ENCODE measurements at regions of chr10 and their contacts with region 1.

Region 1: DNA sequence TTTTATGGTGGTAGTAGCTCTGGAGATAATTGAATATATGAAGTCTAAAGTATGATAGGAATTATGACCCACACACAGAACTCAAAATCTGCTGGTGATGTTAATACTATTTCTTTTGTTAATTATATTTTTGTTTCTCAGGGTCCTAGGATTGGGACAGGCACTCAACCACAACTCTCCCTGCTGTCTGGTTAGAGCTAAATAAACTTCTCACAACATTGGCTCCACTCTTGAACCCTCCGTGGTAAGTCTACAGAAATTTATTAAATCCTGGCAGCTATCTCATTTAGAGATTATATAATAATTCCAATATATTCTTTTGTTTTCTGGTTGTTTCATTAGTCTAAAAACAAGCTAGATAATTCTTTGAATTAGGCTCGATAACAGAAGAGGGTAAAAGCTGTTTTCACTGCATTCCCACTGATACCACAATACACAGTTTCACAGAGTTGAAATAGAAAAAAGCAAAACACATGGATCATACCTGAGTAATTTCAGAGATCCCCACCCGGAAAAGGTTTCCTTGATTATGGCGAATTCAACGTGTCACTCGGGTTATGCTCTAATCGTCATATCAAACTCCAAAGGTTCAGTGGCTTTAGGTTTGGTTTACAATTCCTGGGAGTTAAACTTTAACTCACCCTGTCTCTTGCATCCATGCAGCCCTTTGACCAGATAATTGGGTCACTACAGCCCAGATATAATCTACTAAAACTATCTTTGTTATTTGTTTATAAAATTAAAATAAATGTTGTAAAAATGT is at the start of gene A1CF:
- DNase-seq: peak; percentile 53 to 67
- H3K4me3 ChIP-seq: peak within 1 kb of the TSS; percentile 55
- H3K4me3 Mint-ChIP-seq: peak within 1 kb of the TSS; percentile 85
- H3K27ac Mint-ChIP-seq: peak within 1 kb of the TSS; percentile 86
- H3K4me1 ChIP-seq: peaks cover 33% of the 10 kb centered on the region
- H3K4me1 Mint-ChIP-seq: peaks cover 15% of the 10 kb centered on the region
- H3K27me3 ChIP-seq: no peaks in the 10 kb centered on the region
- H3K27me3 Mint-ChIP-seq: no peaks in the 10 kb centered on the region
- CTCF ChIP-seq: no peak
- total RNA-seq, gene A1CF: 29.9 and 36.0 TPM in 2 replicates

Region 2: DNA sequence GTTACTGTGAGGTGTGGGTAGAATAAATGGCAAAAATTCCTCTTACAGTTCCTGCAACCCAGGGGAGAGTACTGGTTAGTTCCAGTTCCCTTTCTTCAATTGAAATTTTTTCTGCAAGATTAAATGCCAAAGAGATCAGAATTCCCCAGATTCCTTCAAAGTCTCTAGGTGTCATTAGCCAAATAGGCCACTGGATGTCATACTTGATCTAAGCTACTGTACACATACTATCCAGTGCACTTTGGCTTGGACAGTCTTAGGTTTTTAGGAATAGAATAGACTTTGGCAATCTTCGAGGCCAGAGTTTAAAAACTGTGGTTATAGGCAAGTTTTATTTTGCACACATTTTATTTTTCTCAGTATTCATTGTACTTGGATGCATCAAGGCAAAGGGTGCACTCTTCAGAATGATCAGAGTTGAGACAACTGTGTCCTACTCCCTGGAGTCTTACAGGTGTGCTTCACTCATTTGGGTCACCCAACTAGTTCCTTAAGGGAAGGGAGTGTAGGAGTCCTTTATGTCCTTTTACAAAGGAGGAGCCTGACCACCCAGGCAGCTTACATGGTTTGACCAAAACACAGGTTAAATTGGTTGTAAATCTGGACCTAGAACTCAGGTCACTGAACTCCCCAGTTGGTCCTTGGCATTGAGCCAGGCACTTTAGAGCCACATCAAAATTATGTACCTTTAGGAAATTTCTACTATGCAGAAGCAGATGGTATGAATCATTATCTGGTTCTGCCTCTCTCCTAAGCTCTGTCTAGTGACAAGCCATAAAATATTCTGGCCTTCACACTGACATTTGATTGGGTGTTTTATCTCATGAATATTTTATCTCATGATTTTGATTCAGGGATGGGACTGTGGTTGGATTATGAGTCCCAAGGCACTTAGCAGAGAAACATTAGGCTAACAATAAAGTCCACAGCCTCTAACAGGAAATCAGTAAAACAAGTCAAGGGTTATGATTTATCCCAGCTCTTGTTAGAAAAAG is 96.0 kb before region 1 on chr10:
- CTCF ChIA-PET with region 1: no interaction called
- POLR2A ChIA-PET with region 1: no interaction called
- intact Hi-C with region 1: no loop called
- DNase-seq: peak in 1 of 2 experiments; percentile 68
- H3K4me3 ChIP-seq: no peak overlapping the region
- H3K4me3 Mint-ChIP-seq: no peak overlapping the region
- H3K27ac Mint-ChIP-seq: no peak overlapping the region
- H3K4me1 ChIP-seq: peaks cover 4% of the 10 kb centered on the region; the same call in 1 of the 2 replicates
- H3K4me1 Mint-ChIP-seq: peaks cover 10% of the 10 kb centered on the region
- H3K27me3 ChIP-seq: no peaks in the 10 kb centered on the region
- H3K27me3 Mint-ChIP-seq: peaks cover 6% of the 10 kb centered on the region
- CTCF ChIP-seq: peak; percentile 89 to 91

Region 3: GRCh38 chr10:50855015-50855414 is 30.3 kb before region 1 on chr10:
- CTCF ChIA-PET with region 1: no interaction called
- POLR2A ChIA-PET with region 1: interaction called, 3 read pairs
- intact Hi-C with region 1: loop called (anchors 1 kb)
- DNase-seq: no peak
- H3K4me3 ChIP-seq: no peak overlapping the region
- H3K4me3 Mint-ChIP-seq: no peak overlapping the region
- H3K27ac Mint-ChIP-seq: peak overlapping the region; percentile 48
- H3K4me1 ChIP-seq: peaks cover 78% of the 10 kb centered on the region
- H3K4me1 Mint-ChIP-seq: peaks cover 57% of the 10 kb centered on the region
- H3K27me3 ChIP-seq: no peaks in the 10 kb centered on the region
- H3K27me3 Mint-ChIP-seq: no peaks in the 10 kb centered on the region
- CTCF ChIP-seq: no peak

Region 4: GRCh38 chr10:50866317-50866716 is 19.0 kb before region 1 on chr10:
- CTCF ChIA-PET with region 1: no interaction called
- POLR2A ChIA-PET with region 1: interaction called, 3 read pairs
- intact Hi-C with region 1: loop called (anchors 2 kb)
- DNase-seq: no peak
- H3K4me3 ChIP-seq: no peak overlapping the region
- H3K4me3 Mint-ChIP-seq: no peak overlapping the region
- H3K27ac Mint-ChIP-seq: no peak overlapping the region
- H3K4me1 ChIP-seq: 0 out of 2 replicates have a peak, but pooled peaks cover 10% of the 10 kb centered on the region
- H3K4me1 Mint-ChIP-seq: no peaks in the 10 kb centered on the region
- H3K27me3 ChIP-seq: 0 out of 2 replicates have a peak, but pooled peaks cover 2% of the 10 kb centered on the region
- H3K27me3 Mint-ChIP-seq: no peaks in the 10 kb centered on the region
- CTCF ChIP-seq: no peak

Region 5: DNA sequence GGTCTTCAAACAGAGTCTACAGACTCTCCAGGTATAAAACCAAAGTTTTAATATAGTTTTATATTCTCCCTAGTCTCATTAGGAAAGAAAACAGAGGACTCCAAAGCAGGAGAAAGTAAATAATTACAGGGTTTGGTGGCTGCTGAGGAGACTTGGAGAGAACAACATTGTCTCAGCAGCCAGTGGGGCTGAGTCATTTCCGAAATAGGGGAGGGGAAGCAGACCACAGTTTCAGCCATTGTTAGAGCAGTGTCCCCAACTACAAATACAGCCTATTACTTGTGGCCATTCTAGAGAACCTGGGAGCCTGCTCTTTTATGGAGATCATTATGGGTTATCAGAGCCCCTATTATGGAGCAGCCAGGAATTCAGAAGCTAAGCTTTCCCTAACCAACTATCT is 44.4 kb after region 1 on chr10:
- CTCF ChIA-PET with region 1: no interaction called
- POLR2A ChIA-PET with region 1: no interaction called
- intact Hi-C with region 1: no loop called
- DNase-seq: no peak
- H3K4me3 ChIP-seq: no peak overlapping the region
- H3K4me3 Mint-ChIP-seq: no peak overlapping the region
- H3K27ac Mint-ChIP-seq: no peak overlapping the region
- H3K4me1 ChIP-seq: no peaks in the 10 kb centered on the region
- H3K4me1 Mint-ChIP-seq: no peaks in the 10 kb centered on the region
- H3K27me3 ChIP-seq: no peaks in the 10 kb centered on the region
- H3K27me3 Mint-ChIP-seq: peaks cover 17% of the 10 kb centered on the region
- CTCF ChIP-seq: no peak